ENCODE measurements at regions of chr21 and their contacts with region 1.

Region 1: DNA sequence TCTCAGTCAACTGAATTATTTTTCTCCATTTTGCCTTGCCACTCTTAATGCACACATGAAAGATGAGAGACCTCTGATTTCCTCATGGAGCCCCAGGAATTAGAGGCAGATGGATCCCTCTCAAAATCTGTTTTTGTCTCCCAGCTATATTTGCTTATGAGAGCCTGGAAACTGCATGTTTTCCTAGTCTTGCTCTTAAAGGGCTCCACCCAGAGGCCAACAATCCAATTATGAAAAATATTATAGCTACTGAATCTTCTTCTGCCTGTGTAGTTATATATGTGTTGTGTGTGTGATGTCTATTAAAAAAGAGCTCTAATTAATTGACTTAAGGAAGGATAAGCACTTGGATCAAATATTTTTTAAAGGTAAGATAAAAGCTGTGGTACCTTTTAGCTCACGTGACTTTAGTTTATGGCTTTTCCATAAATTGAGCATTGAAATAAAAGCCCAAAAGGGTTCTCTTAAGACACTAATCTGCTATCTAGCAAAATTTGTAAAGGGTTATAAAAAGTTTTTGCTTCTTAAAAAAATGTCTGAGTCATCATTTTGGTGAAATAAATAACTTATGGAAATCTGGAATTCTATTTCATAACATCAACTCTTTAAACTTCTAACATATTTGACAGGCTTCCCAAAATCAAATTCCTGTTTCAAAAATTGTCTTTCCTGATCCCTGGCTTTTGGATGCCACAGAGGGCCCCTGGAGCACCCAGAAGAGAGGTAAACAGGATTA is 31.2 kb upstream of the TSPEAR start:
- DNase-seq: no peak
- H3K4me3 ChIP-seq: no peak overlapping the region
- H3K27ac ChIP-seq: no peak overlapping the region
- H3K4me1 ChIP-seq: no peaks in the 10 kb centered on the region
- H3K27me3 ChIP-seq: peaks cover 13% of the 10 kb centered on the region
- CTCF ChIP-seq: peak; percentile 47

Region 2: DNA sequence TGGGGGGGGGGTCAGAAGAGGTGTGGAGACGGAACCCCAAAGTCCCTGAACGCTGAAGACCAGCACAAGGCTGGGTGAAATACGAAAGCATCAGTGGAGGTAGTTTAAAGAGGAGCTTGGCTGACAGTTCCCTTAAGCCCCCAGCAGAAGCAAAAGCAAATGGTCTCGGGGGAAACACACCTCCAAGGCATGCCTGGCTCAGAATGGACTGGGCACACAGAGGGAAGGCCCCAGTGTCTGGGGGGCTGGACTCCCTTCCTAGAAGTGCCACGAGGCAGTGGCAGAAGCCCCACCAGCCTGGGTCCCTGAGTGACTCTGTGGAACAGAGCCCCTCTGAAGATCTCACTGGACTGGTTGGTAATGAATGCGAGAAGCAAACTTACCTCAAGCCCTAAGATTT is 15.1 kb after region 1 on chr21:
- CTCF ChIA-PET with region 1: interaction called, 11 read pairs
- POLR2A ChIA-PET with region 1: no interaction called
- intact Hi-C with region 1: no loop called
- DNase-seq: no peak
- H3K4me3 ChIP-seq: no peak overlapping the region
- H3K27ac ChIP-seq: no peak overlapping the region
- H3K4me1 ChIP-seq: peaks cover 12% of the 10 kb centered on the region
- H3K27me3 ChIP-seq: no peaks in the 10 kb centered on the region
- CTCF ChIP-seq: no peak

Region 3: GRCh38 chr21:44779417-44780136 is 37.0 kb after region 1 on chr21:
- CTCF ChIA-PET with region 1: no interaction called
- POLR2A ChIA-PET with region 1: no interaction called
- intact Hi-C with region 1: no loop called
- DNase-seq: no peak
- H3K4me3 ChIP-seq: no peak overlapping the region
- H3K27ac ChIP-seq: no peak overlapping the region
- H3K4me1 ChIP-seq: no peaks in the 10 kb centered on the region
- H3K27me3 ChIP-seq: no peaks in the 10 kb centered on the region
- CTCF ChIP-seq: no peak

Region 4: DNA sequence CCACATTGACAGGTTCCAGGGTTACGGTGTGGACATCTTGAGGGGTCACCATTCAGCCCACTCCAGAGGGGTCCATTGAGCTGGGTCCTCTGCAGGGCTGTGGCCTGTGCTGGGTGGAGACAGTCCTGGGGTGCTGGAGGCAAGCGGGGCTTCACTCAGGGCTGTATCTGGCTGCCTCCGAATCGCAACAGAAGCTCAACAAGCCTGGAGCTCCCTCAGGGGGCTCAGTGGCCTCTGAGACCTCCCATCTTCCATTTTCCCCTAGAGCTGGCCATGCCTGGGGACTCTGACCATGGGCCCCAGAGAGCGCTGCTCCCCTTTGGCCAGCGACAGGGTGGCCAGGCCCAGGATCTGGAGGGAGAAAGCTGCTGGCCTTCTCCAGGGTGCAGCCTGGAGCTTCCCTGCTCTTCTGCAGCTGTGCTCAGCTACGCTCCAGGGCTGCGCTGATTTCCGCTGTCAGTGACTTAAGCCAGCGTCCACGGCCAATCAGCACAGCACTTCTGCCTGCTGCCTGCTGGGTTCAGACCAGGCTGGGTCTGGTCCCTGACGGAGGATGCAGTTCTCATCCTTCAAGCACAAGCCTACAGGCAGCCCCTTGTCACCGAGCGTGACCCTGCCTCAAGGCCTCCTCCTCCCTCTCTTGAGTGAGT is 286.8 kb after region 1 on chr21:
- CTCF ChIA-PET with region 1: no interaction called
- POLR2A ChIA-PET with region 1: no interaction called
- intact Hi-C with region 1: no loop called
- DNase-seq: no peak
- H3K4me3 ChIP-seq: no peak overlapping the region
- H3K27ac ChIP-seq: no peak overlapping the region
- H3K4me1 ChIP-seq: no peaks in the 10 kb centered on the region
- H3K27me3 ChIP-seq: no peaks in the 10 kb centered on the region; the same call in 1 of the 2 replicates
- CTCF ChIP-seq: no peak